HAP-1 (cell line): ENCODE measurements at regions of chr14 and their contacts with region 1.

Region 1: GRCh38 chr14:69818757-69819191 is 21.7 kb upstream of the SLC10A1 start:
- DNase-seq: peak; percentile 58 to 76
- H3K4me3 ChIP-seq: no peak overlapping the region
- H3K4me1 ChIP-seq: no peaks in the 10 kb centered on the region
- H3K27me3 ChIP-seq: peaks cover 33% of the 10 kb centered on the region

Region 2: DNA sequence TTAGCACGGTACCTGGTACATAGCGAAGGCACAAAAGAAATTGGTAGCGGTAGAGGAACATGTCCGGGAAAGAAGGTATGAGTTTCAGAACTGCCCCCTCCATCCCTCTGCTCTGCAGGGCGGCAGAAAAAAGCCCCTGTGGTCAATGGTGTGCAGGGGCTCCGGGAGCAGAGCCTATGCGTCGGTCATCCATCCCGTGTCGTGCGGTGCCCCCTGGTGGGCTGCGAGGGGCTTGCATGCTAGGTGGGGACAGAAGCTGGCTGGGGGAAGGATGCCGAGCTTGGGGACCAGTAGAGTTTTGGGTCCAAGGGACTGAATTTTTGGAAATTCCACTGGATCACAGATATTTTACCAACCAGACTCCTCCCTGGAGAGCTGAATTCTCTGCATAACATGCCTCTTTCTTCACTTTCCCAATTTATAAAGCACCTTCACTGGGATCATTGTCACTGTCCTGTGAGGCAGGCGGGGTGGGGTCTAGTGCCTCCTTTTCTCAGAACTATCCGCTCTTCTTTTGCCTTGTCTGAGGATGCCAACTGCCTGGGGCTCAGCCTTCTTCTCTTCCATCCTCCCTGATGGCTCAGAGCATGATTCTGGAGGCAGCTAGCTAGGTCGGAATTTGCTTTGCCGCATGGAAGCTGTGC is 209.1 kb after region 1 on chr14:
- in situ Hi-C with region 1: loop called (anchors 5 kb)
- DNase-seq: peak; percentile 25 to 88
- H3K4me3 ChIP-seq: no peak overlapping the region
- H3K4me1 ChIP-seq: no peaks in the 10 kb centered on the region
- H3K27me3 ChIP-seq: peaks cover 6% of the 10 kb centered on the region